Colonic mucosa (tissue), 4 donors: ENCODE measurements at regions of chr14 and their contacts with region 1.

Region 1: DNA sequence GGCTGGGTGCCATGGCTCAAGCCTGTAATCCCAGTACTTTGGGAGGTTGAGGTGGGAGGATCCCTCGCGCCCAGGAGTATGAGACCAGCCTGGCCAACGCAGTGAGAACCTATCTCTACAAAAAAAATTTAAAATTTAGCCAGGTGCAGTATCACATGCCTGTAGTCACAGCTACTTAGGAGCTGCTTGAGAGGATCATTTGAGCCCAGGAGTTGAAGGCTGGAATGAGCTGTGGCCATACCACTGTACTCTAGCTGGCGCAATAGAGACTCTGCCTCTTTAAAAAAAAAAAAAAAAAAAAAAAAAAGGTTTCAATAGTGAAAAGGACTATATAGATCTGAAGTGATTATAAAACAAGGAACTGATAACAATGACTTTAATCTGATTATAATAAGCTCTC is 13.5 kb downstream of the PSMA3 start:
- DNase-seq: no peak
- H3K4me3 ChIP-seq: no peak overlapping the region
- H3K27ac ChIP-seq: no peak overlapping the region
- H3K4me1 ChIP-seq: no peaks in the 10 kb centered on the region
- H3K27me3 ChIP-seq: no peaks in the 10 kb centered on the region
- CTCF ChIP-seq: no peak

Region 2: DNA sequence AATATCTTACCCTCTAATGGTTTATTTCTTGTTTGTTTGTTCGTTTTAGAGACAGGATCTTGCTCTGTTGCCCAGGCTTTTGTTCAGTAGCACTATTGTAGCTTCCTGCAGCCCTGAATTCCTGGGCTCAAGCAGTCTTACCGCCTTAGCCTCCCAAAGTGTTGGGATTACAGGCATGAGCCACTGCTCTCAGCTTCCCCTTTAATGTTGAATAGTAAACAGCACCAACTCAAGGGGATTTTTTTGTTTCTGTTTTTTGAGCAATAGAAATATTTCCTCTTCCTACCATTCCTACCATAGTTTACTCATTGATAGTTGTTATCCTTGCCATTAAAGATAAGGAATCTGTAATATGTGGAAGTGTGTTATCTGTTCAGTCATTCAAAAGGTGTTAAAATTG is 50.9 kb after region 1 on chr14:
- intact Hi-C with region 1: loop called (anchors 5 kb)
- DNase-seq: no peak
- H3K4me3 ChIP-seq: no peak overlapping the region
- H3K27ac ChIP-seq: no peak overlapping the region
- H3K4me1 ChIP-seq: no peaks in the 10 kb centered on the region
- H3K27me3 ChIP-seq: no peaks in the 10 kb centered on the region
- CTCF ChIP-seq: no peak

Region 3: DNA sequence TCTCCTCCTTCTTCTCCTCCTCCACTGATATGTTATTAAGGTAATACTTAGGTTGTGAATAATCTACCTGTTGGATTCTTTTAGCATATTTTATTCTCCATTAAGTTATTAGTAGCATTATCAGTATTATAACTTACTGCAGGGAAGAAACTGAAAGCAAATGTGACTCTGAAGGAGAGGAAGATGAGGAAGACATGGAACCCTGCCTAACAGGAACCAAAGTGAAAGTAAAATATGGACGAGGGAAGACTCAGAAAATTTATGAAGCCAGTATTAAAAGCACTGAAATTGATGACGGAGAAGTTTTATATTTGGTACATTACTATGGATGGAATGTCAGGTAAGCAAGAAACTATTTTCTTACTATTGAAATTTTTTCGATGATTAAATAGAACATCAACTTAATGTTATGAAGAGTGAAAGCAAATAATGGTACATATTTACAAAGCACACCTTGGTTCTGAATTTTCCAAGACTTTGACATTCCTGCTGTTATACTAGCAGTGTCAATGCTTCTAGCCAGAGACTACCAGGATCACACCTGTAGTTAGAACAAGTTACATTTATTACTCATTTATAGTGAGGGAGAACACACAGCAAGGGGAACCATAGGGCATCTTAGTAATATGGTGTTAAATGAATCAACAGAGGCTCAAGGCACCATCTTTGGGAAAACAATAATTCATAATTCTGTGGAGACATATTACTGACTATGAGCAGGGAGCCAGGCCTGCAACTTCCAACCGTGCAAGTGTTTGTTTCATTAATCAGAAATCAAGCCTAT is 95.6 kb after region 1 on chr14:
- intact Hi-C with region 1: no loop called
- DNase-seq: no peak
- H3K4me3 ChIP-seq: no peak overlapping the region
- H3K27ac ChIP-seq: no peak overlapping the region
- H3K4me1 ChIP-seq: no peaks in the 10 kb centered on the region
- H3K27me3 ChIP-seq: no peaks in the 10 kb centered on the region
- CTCF ChIP-seq: no peak

Region 4: GRCh38 chr14:59046746-59047145 is 788.6 kb after region 1 on chr14:
- intact Hi-C with region 1: no loop called
- DNase-seq: no peak
- H3K4me3 ChIP-seq: no peak overlapping the region
- H3K27ac ChIP-seq: no peak overlapping the region
- H3K4me1 ChIP-seq: no peaks in the 10 kb centered on the region
- H3K27me3 ChIP-seq: no peaks in the 10 kb centered on the region
- CTCF ChIP-seq: no peak